ENCODE measurements at regions of chr1 and their contacts with region 1.

Region 1: DNA sequence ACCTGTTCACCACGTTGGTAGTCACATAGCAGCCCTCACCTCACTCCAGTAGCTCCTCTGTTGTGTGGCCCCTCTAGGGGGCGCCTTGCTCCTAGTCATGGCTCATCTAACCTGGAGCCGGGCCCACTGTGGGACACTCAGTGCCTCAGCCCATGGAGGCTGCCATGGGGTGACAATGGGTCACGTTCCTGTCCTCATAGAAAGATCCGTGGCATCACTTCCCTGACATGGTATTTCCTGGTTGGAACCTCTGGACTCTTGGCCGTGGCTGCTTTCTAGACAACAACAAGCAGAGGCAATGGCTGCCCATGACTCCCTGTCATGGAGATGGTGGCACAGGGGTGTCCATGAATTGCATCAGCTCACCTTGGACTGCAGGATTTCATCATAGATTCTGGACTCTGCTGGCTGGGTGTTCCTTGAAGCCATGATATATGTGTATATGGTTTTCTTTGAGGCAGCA is 27.5 kb upstream of the SLAMF6 start:
- DNase-seq: no peak
- H3K4me3 Mint-ChIP-seq: no peak overlapping the region
- H3K27ac Mint-ChIP-seq: no peak overlapping the region
- H3K4me1 Mint-ChIP-seq: no peaks in the 10 kb centered on the region
- H3K27me3 Mint-ChIP-seq: peaks cover 4% of the 10 kb centered on the region
- CTCF ChIP-seq: peak; percentile 21

Region 2: DNA sequence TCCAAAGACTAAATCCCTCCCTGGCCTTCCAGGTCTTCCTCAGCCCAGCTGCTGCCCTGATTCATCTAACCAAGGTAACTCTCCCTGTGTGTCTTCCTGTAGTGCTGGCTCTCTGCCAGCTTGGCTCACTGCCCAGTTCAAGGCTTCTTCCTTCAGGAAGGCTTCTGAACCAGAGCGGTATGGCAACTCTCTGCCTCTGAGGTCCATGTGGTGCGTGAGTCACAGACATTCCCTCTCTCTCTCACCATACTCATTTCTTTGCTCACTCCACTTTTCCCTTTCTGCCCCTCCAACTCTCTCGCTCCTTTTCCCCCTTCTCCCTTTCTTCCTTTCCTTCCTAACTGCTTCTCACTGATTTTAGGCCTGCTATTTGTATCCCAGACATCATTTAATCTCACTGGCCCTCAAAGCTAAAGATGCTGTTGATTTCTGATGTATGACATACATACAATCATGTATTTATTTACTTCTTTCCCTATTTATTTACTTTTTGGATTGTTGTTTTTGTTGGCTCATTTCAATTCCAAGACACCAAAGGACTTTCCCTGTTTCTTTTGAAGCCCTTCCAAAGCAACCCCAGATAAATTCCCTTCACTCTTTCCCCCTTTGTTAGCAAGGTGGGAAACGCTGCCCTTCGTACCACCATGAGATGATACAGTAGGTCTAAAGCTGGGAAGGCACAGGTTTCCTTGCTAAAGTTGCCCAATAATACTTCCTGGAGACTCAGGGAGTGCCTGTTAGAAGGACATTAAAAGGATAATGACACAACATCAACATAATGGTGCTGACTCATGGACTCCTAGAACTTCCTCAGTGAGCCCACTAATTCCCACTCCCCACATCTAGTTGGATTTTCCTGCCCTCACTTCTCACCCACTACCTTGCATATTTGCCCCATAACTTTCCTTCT is 668.4 kb before region 1 on chr1:
- CTCF ChIA-PET with region 1: no interaction called
- POLR2A ChIA-PET with region 1: no interaction called
- intact Hi-C with region 1: no loop called
- DNase-seq: peak; percentile 100
- H3K4me3 Mint-ChIP-seq: no peak overlapping the region
- H3K27ac Mint-ChIP-seq: no peak overlapping the region
- H3K4me1 Mint-ChIP-seq: peaks cover 14% of the 10 kb centered on the region
- H3K27me3 Mint-ChIP-seq: no peaks in the 10 kb centered on the region
- CTCF ChIP-seq: no peak

Region 3: DNA sequence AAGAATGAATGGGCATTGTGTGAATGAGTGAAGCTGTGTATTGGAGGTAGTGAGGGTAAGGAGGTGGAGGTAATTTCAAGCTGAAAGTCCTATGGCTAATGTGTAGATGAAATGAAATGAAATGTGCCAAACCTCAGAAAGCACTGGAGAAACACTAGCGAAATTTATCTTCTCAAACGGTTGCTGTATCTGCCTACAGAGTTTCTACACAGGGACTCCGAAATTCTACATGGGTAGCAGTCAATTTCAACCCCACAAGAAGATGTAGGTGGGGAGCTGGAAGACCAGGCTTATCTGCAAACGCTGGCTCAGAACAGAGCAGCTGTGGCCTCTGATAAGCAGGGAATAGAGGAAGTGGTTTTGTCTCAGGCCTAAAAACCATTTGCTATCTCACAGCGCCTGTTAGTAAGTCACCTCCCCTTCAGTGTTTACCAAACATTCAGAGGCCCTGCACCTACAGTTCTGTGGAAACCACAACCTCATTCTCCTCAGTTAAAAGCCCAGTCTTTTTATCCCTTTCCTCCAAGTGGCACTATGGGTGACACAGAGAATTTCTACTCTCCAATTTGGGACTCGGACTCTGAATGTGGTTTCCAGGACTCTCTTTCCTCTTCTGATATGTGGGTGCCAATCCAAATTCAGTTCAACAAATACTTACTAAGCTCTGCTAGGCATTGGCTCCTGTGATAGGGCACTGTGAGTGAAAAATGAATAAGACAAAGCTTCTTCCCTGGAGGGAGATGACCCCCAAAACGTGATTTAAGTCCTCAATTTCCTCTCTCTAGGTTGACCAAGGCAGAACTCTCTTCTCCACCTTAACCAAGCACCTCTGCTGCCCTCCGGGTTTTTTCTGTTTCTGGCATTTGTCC is 10.4 kb before region 1 on chr1:
- CTCF ChIA-PET with region 1: interaction called, 14 read pairs
- POLR2A ChIA-PET with region 1: no interaction called
- intact Hi-C with region 1: no loop called
- DNase-seq: no peak
- H3K4me3 Mint-ChIP-seq: no peak overlapping the region
- H3K27ac Mint-ChIP-seq: no peak overlapping the region
- H3K4me1 Mint-ChIP-seq: peaks cover 7% of the 10 kb centered on the region
- H3K27me3 Mint-ChIP-seq: no peaks in the 10 kb centered on the region
- CTCF ChIP-seq: no peak